ENCODE measurements at regions of chr5 and their contacts with region 1.

Region 1: GRCh38 chr5:163459922-163460766 is at the starts of genes HMMR and NUDCD2:
- DNase-seq: peak; percentile 95
- H3K4me3 Mint-ChIP-seq: peak within 1 kb of the TSS; percentile 80
- H3K27ac Mint-ChIP-seq: peak within 1 kb of the TSS; percentile 98
- H3K4me1 Mint-ChIP-seq: peaks cover 51% of the 10 kb centered on the region
- H3K27me3 Mint-ChIP-seq: no peaks in the 10 kb centered on the region
- total RNA-seq, gene HMMR: 74.7 to 75.7 TPM
- total RNA-seq, gene NUDCD2: 36.0 to 39.3 TPM

Region 2: GRCh38 chr5:161925960-161926359 is 1534.2 kb before region 1 on chr5:
- CTCF ChIA-PET with region 1: no interaction called
- POLR2A ChIA-PET with region 1: no interaction called
- DNase-seq: no peak
- H3K4me3 Mint-ChIP-seq: no peak overlapping the region
- H3K27ac Mint-ChIP-seq: no peak overlapping the region
- H3K4me1 Mint-ChIP-seq: no peaks in the 10 kb centered on the region
- H3K27me3 Mint-ChIP-seq: no peaks in the 10 kb centered on the region

Region 3: DNA sequence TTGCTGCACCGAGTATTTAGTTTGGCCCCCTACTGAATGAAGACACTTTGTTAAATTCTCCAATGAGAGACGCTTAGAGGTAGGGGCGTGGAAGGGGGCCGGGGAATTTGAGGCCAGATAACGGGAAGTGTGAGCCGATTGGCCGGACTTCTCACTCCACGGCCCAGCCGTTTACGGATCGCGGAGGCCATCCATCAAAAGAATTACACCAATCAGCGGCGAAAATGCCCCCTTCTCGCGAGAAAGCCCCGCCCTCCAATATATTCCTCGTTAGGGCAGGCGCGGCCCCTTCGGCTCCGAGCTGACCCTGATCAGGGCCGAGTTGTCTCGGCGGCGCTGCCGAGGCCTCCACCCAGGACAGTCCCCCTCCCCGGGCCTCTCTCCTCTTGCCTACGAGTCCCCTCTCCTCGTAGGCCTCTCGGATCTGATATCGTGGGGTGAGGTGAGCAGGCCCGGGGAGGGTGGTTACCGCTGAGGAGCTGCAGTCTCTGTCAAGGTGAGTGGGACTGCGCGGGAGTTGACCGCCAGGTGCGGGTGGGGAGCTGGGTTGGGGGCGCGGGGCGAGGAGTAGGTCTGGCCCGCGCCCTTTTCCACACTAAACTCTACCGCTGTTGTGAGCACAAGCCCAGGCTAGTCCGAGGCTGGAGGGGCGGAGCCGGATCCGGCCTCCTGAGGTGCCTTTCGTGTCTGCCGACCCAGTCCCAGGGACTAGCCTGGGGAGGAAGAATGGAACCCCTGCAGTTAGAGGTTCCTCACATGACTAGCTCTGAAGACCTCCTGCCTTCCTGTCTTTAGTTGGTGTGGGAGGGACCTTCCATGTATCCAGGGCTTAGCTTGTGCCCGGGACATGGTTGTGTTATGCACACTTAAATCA is 22.6 kb before region 1 on chr5 and contains the start of gene CCNG1:
- CTCF ChIA-PET with region 1: interaction called, 32 read pairs
- POLR2A ChIA-PET with region 1: interaction called, 385 read pairs
- DNase-seq: peak; percentile 93
- H3K4me3 Mint-ChIP-seq: peak within 1 kb of the TSS; percentile 86
- H3K27ac Mint-ChIP-seq: peak within 1 kb of the TSS; percentile 76
- H3K4me1 Mint-ChIP-seq: peaks cover 47% of the 10 kb centered on the region
- H3K27me3 Mint-ChIP-seq: peaks cover 5% of the 10 kb centered on the region
- total RNA-seq, gene CCNG1: 143 to 154 TPM

Region 4: GRCh38 chr5:163473635-163474243 is 13.6 kb after region 1 on chr5:
- CTCF ChIA-PET with region 1: interaction called, 17 read pairs
- POLR2A ChIA-PET with region 1: interaction called, 69 read pairs
- DNase-seq: no peak
- H3K4me3 Mint-ChIP-seq: no peak overlapping the region
- H3K27ac Mint-ChIP-seq: no peak overlapping the region
- H3K4me1 Mint-ChIP-seq: peaks cover 12% of the 10 kb centered on the region
- H3K27me3 Mint-ChIP-seq: no peaks in the 10 kb centered on the region

Region 5: GRCh38 chr5:163489055-163489744 is 29.1 kb after region 1 on chr5:
- CTCF ChIA-PET with region 1: no interaction called
- POLR2A ChIA-PET with region 1: interaction called, 23 read pairs
- DNase-seq: no peak
- H3K4me3 Mint-ChIP-seq: no peak overlapping the region
- H3K27ac Mint-ChIP-seq: no peak overlapping the region
- H3K4me1 Mint-ChIP-seq: no peaks in the 10 kb centered on the region
- H3K27me3 Mint-ChIP-seq: no peaks in the 10 kb centered on the region

Region 6: DNA sequence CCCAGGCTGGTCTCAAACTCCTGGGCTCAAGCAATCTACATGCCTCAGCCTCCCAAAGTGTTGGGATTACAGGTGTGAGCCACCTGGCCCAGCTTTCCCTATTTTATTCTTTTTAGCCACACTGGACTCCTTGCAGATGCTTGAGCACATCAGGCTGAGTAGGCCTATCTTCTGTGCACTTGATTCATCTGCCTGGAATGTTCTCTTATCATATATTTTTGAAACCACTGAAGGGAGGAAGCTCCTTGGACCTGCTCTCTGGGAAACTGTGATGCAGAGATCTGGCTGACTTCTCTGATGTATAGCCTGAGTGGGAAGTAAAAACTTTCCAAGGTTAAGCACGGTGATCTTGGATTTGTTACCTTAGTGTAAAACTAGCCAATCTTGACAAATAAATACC is 38.7 kb after region 1 on chr5:
- CTCF ChIA-PET with region 1: interaction called, 63 read pairs
- POLR2A ChIA-PET with region 1: interaction called, 418 read pairs
- DNase-seq: no peak
- H3K4me3 Mint-ChIP-seq: no peak overlapping the region
- H3K27ac Mint-ChIP-seq: no peak overlapping the region
- H3K4me1 Mint-ChIP-seq: peaks cover 10% of the 10 kb centered on the region
- H3K27me3 Mint-ChIP-seq: no peaks in the 10 kb centered on the region

Region 7: GRCh38 chr5:163505368-163506094 is 45.4 kb after region 1 on chr5 and contains the start of gene MAT2B:
- CTCF ChIA-PET with region 1: interaction called, 63 read pairs
- POLR2A ChIA-PET with region 1: interaction called, 418 read pairs
- DNase-seq: peak; percentile 96
- H3K4me3 Mint-ChIP-seq: peak within 1 kb of the TSS; percentile 96
- H3K27ac Mint-ChIP-seq: peak within 1 kb of the TSS; percentile 99
- H3K4me1 Mint-ChIP-seq: peaks cover 36% of the 10 kb centered on the region
- H3K27me3 Mint-ChIP-seq: no peaks in the 10 kb centered on the region
- total RNA-seq, gene MAT2B: 112 to 119 TPM

Region 8: DNA sequence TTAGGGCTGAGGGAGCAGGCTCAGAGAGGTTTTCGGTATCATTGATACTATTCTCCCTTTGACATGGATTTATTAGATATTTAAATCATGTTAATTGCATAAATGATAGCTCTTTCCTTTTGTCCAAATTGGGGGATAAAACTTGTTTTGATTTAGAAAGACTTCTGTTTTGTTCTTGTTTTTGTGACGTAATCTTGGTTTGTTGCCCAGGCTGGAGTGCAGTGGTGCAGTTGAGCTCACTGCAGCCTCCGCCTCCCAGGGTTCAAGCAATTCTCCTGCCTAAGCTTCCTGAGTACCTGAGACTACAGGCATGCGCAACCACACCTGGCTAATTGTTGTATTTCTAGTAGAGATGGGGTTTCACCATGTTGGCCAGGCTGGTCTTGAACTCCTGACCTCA is 52.4 kb after region 1 on chr5:
- CTCF ChIA-PET with region 1: interaction called, 41 read pairs
- POLR2A ChIA-PET with region 1: interaction called, 418 read pairs
- DNase-seq: no peak
- H3K4me3 Mint-ChIP-seq: no peak overlapping the region
- H3K27ac Mint-ChIP-seq: no peak overlapping the region
- H3K4me1 Mint-ChIP-seq: peaks cover 43% of the 10 kb centered on the region
- H3K27me3 Mint-ChIP-seq: no peaks in the 10 kb centered on the region

Measured in activated CD4-positive, alpha-beta memory T cell treated with anti-CD3 and anti-CD28 coated beads, Interleukin-2, amount 10 ng/mL, durations not matched to agents 7 days and 5 days (primary cell).